PC-3 (cell line): ENCODE measurements at regions of chr17 and their contacts with region 1.

Region 1: GRCh38 chr17:64081802-64082799 is 47.8 kb downstream of the ERN1 start:
- DNase-seq: peak; percentile 98
- ATAC-seq: peak; percentile 82
- H3K4me3 ChIP-seq: peak overlapping the region; percentile 44
- H3K27ac ChIP-seq: peak overlapping the region; percentile 95
- H3K4me1 ChIP-seq: peaks cover 62% of the 10 kb centered on the region
- H3K27me3 ChIP-seq: no peaks in the 10 kb centered on the region
- CTCF ChIP-seq: peak; percentile 41

Region 2: GRCh38 chr17:64097196-64097936 is 15.3 kb after region 1 on chr17:
- CTCF ChIA-PET with region 1: no interaction called
- POLR2A ChIA-PET with region 1: interaction called, 5 read pairs
- intact Hi-C with region 1: loop called (anchors 2 kb)
- DNase-seq: peak; percentile 70
- ATAC-seq: peak; percentile 70
- H3K4me3 ChIP-seq: 0 out of 2 replicates have a peak overlapping the region, but pooled peaks have one; percentile 2
- H3K27ac ChIP-seq: peak overlapping the region; percentile 84
- H3K4me1 ChIP-seq: peaks cover 37% of the 10 kb centered on the region
- H3K27me3 ChIP-seq: no peaks in the 10 kb centered on the region
- CTCF ChIP-seq: no peak

Region 3: GRCh38 chr17:64406321-64407200 is 324.5 kb after region 1 on chr17:
- CTCF ChIA-PET with region 1: no interaction called
- POLR2A ChIA-PET with region 1: no interaction called
- intact Hi-C with region 1: no loop called
- DNase-seq: peak; percentile 54
- ATAC-seq: peak; percentile 5; the same call in 1 of the 2 replicates
- H3K4me3 ChIP-seq: no peak overlapping the region
- H3K27ac ChIP-seq: no peak overlapping the region
- H3K4me1 ChIP-seq: peaks cover 11% of the 10 kb centered on the region
- H3K27me3 ChIP-seq: no peaks in the 10 kb centered on the region
- CTCF ChIP-seq: no peak